ENCODE measurements at regions of chr20 and their contacts with region 1.

Region 1: GRCh38 chr20:49888345-49888966 is 26.9 kb downstream of the SPATA2 start:
- DNase-seq: no peak
- H3K4me3 ChIP-seq: no peak overlapping the region
- CTCF ChIP-seq: peak; percentile 80

Region 2: GRCh38 chr20:49865559-49865958 is 22.9 kb before region 1 on chr20:
- CTCF ChIA-PET with region 1: interaction called, 32 read pairs
- POLR2A ChIA-PET with region 1: no interaction called
- DNase-seq: no peak
- H3K4me3 ChIP-seq: no peak overlapping the region
- CTCF ChIP-seq: no peak

Region 3: GRCh38 chr20:49872056-49872455 is 16.4 kb before region 1 on chr20:
- CTCF ChIA-PET with region 1: interaction called, 32 read pairs
- POLR2A ChIA-PET with region 1: no interaction called
- DNase-seq: no peak
- H3K4me3 ChIP-seq: no peak overlapping the region
- CTCF ChIP-seq: no peak

Region 4: GRCh38 chr20:49915378-49916145 is 27.1 kb after region 1 on chr20 and contains the start of gene SPATA2:
- CTCF ChIA-PET with region 1: interaction called, 158 read pairs
- POLR2A ChIA-PET with region 1: interaction called, 4 read pairs
- DNase-seq: peak; percentile 60
- H3K4me3 ChIP-seq: peak within 1 kb of the TSS; percentile 96
- CTCF ChIP-seq: no peak

Measured in AG04449 (cell line).